BJ (cell line): ENCODE measurements at regions of chr17 and their contacts with region 1.

Region 1: DNA sequence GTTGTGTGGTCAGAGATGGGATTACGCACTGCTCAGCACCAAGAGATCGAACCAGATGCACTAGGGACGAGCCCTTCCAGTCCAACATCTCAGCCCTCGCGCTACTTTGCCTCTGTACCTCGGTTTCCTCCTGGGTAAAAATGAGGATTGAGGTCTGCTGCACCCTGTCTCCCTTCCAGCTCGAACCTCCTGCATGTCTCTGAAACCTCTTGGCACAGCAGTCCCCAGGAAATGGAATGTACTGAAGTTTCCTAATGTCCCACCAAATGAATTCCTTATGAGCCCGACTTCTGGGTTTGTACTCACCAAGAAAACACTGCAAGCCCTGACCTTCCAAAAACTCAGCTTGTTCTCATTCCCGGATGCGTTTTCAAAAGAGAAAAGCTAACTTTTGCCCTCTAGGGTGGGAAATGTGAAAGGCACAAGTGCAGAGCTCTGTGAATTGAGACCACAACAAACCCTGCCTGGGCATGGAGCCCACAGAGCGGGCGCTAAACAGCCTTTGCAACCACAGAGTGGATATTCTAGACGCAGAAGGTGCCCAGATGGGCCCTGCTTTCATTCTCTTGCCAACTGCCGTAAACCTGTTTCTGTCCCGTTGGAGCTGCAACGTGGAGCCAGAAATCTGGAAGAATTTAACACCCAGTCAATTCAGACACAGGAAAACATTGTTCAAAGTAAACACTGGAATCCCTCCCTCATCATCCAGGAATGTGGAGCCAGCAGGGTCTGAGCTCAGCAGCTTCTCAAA is 10.3 kb downstream of the CDRT4 start:
- DNase-seq: peak; percentile 93
- H3K4me3 ChIP-seq: no peak overlapping the region
- H3K27me3 ChIP-seq: no peaks in the 10 kb centered on the region
- CTCF ChIP-seq: peak; percentile 64

Region 2: GRCh38 chr17:15377616-15378015 is 79.5 kb before region 1 on chr17:
- CTCF ChIA-PET with region 1: interaction called, 11 read pairs
- POLR2A ChIA-PET with region 1: no interaction called
- DNase-seq: peak; percentile 75
- H3K4me3 ChIP-seq: no peak overlapping the region
- H3K27me3 ChIP-seq: no peaks in the 10 kb centered on the region
- CTCF ChIP-seq: no peak

Region 3: GRCh38 chr17:15483431-15483830 is 26.3 kb after region 1 on chr17:
- CTCF ChIA-PET with region 1: no interaction called
- POLR2A ChIA-PET with region 1: no interaction called
- DNase-seq: no peak
- H3K4me3 ChIP-seq: no peak overlapping the region
- H3K27me3 ChIP-seq: no peaks in the 10 kb centered on the region
- CTCF ChIP-seq: no peak